Activated CD4-positive, alpha-beta T cell treated with anti-CD3 and anti-CD28 coated beads, Interleukin-2, amount 10 ng/mL, durations not matched to agents 24 days and 14 days (primary cell): ENCODE measurements at regions of chr2 and their contacts with region 1.

Region 1: GRCh38 chr2:45849491-45850283 is 198.2 kb downstream of the PRKCE start:
- DNase-seq: no peak
- H3K4me3 Mint-ChIP-seq: peak overlapping the region; percentile 4
- H3K27ac Mint-ChIP-seq: peak overlapping the region; percentile 14
- H3K4me1 Mint-ChIP-seq: peaks cover 39% of the 10 kb centered on the region
- H3K27me3 Mint-ChIP-seq: no peaks in the 10 kb centered on the region

Region 2: GRCh38 chr2:45860136-45861121 is 10.7 kb after region 1 on chr2:
- intact Hi-C with region 1: loop called (anchors 1 kb)
- DNase-seq: peak; percentile 82
- H3K4me3 Mint-ChIP-seq: peak overlapping the region; percentile 81
- H3K27ac Mint-ChIP-seq: peak overlapping the region; percentile 80
- H3K4me1 Mint-ChIP-seq: peaks cover 53% of the 10 kb centered on the region
- H3K27me3 Mint-ChIP-seq: no peaks in the 10 kb centered on the region

Region 3: GRCh38 chr2:45889053-45889452 is 39.4 kb after region 1 on chr2:
- intact Hi-C with region 1: no loop called
- DNase-seq: peak; percentile 77
- H3K4me3 Mint-ChIP-seq: no peak overlapping the region
- H3K27ac Mint-ChIP-seq: no peak overlapping the region
- H3K4me1 Mint-ChIP-seq: peaks cover 27% of the 10 kb centered on the region
- H3K27me3 Mint-ChIP-seq: no peaks in the 10 kb centered on the region

Region 4: GRCh38 chr2:46002507-46002883 is 152.8 kb after region 1 on chr2:
- intact Hi-C with region 1: no loop called
- DNase-seq: no peak
- H3K4me3 Mint-ChIP-seq: no peak overlapping the region
- H3K27ac Mint-ChIP-seq: no peak overlapping the region
- H3K4me1 Mint-ChIP-seq: peaks cover 2% of the 10 kb centered on the region
- H3K27me3 Mint-ChIP-seq: peaks cover 6% of the 10 kb centered on the region